Panc1 (cell line): ENCODE measurements at regions of chr10 and their contacts with region 1.

Region 1: DNA sequence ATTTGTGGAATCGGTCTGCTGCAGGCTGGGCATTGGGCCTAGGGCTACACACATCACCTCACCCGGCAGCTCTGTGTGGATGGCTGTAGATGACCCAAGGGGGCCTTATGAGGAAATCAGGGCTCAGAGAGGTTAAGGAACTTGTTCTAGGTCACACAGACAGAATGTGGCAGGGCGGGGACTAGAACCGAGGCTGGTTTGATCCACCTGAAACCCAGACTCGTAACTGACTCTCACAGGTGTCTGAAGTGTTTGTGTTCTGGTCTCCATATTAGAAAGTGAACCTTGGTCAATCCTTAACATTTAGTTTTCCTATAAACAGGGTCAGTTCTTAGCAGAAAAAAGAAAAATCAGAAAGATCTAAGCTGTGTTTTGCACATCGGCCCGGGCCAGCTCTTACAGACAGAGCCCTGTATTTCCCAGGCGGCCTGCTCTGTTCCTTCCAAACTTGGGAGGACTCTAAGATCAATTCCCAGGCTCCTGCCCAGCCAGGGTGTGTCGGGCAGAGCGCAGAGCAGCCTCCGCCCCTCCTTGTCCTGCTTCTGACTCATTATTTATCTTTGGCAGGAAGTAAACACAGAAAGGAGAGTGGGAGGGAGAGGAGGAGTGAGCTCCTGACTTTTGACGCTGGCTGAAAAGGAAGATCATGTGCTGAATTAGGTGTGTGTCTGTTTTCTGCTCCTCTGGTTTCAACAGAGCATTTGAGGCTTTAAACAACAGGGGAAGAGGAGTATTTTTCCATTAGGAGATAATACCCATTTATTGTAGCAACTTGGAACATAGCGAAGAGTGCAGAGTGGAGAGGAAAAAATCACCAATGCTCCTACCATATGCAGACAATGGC is 74.1 kb downstream of the TACC2 start:
- DNase-seq: peak; percentile 97
- ATAC-seq: peak; percentile 99
- H3K4me3 ChIP-seq: no peak overlapping the region
- H3K27ac ChIP-seq: peak overlapping the region; percentile 92
- H3K4me1 ChIP-seq: peaks cover 39% of the 10 kb centered on the region
- H3K27me3 ChIP-seq: no peaks in the 10 kb centered on the region
- CTCF ChIP-seq: no peak

Region 2: DNA sequence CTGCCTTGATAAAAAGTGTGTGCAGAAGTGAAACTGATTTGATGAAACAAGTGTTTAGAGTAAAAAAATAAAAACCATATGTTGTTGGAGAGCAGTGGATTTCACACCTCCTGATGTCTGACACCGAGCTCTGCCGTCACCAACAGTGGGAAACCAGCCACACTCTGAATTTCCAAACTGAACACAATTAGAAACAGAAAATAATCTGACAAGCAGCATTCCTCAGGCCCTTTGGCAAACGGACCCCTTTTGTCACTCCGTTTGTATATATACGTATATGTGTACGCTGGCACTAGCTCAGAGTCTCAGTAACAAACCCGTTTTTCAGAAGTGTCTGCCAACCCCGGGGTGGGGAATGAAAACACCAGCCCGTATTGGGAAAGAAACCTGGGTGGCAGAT is 41.7 kb before region 1 on chr10:
- CTCF ChIA-PET with region 1: interaction called, 10 read pairs
- POLR2A ChIA-PET with region 1: no interaction called
- in situ Hi-C with region 1: no loop called
- intact Hi-C with region 1: no loop called
- DNase-seq: no peak
- ATAC-seq: no peak
- H3K4me3 ChIP-seq: no peak overlapping the region
- H3K27ac ChIP-seq: peak overlapping the region; percentile 36
- H3K4me1 ChIP-seq: peaks cover 22% of the 10 kb centered on the region
- H3K27me3 ChIP-seq: no peaks in the 10 kb centered on the region
- CTCF ChIP-seq: no peak